Cardiac septum (tissue), 1 donor: ENCODE measurements at regions of chr6 and their contacts with region 1.

Region 1: GRCh38 chr6:29752451-29753308 is 29.4 kb downstream of the HLA-F start:
- DNase-seq: peak; percentile 95

Region 2: DNA sequence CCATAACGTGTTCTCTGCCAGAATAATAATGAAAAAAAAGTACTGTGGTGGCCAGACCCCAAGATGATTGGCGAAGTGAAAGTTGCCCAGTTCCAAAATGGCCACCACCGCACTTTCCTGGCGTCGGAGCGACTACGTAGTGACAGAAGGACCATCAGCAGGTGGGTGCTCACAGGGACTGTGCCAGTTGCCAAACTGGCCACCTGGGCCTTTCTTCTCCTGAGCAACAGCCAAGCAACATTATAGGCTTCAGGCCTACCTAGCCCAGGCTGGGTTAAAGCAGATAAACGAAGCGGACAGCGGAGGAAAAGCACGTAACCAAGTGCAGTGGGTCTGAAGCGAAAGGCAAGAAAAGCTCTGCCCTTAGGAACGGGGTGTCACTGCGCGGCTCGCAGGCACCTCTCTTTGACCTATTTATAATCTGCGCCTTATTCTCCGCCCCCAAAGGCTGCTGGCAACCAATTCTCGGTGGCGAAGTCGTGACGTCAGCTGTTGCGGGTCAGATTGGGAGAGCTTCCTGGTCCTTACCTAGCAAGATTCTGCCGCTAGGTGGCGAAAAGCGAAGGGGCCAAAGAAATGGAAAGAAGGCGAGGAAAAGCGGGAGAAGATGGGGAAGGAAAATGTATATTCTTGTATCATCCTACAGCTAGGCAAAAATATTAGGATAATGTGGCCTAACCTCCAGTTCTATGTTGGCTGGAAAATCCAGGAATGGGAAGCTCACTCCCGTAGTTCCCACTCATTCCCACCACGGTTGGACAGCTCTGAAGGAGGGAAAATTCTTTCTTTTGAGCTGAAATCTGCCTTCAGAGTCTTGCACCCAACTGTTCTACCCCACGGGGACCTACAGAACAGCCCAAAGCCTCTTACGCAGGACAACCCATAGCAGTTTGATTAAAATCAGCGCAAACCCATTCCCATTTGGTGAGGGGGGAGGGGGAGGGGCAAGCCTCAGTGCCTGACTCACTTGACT is 102.7 kb before region 1 on chr6:
- intact Hi-C with region 1: loop called (anchors 5 kb)
- DNase-seq: peak; percentile 100

Region 3: GRCh38 chr6:29705389-29706231 is 47.1 kb before region 1 on chr6:
- intact Hi-C with region 1: loop called (anchors 5 kb)
- DNase-seq: no peak

Region 4: GRCh38 chr6:29792123-29793035 is 39.7 kb after region 1 on chr6:
- intact Hi-C with region 1: loop called (anchors 5 kb)
- DNase-seq: peak; percentile 87